ENCODE measurements at regions of chr9 and their contacts with region 1.

Region 1: DNA sequence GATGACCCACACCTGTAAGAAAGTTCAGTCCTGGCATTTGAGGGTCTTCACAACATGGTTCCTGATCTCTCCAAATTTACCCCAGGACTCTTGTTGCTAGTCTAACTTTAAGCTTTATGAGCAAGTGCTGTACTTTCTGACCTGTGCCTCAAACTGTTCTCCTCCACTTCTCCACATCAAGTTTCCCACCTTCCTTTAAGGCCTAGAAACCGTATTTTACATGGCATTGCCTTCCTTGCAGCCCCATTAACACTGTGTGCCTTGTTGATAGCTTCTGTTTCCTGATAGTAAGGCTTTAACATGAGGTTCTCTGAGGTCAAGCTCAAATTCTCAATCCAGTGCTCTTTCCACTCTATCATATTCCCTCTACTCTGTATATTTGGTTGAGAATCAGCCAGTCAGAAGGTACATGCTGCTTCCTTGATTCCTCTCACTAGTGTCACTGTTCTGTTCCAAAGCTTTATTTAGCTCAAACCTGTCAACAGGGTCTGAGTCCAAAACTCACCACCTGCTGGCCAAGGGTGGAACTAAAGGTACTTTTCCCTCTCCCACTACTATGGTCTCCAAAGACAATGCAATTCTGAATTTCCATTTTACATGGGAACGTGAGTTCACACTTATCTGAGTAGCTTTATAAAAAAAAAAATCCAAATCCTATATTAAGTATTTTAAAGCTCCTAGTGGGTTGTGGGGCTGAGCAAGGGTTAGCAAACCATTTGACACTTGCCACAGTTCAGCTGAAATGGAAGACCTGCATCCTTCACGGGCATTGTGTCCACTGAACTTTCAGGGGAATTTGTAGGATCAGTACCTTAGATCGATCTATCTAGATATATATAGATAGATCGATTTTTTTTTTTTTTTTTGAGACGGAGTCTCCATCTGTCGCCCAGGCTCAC is 21.1 kb downstream of the VCP start:
- DNase-seq: peak; percentile 53 to 80 (median 78)
- H3K4me3 ChIP-seq: no peak overlapping the region
- H3K27ac ChIP-seq: peak overlapping the region in 1 of 2 experiments; percentile 6
- H3K4me1 ChIP-seq: no peaks in the 10 kb centered on the region
- H3K27me3 ChIP-seq: no peaks in the 10 kb centered on the region

Region 2: DNA sequence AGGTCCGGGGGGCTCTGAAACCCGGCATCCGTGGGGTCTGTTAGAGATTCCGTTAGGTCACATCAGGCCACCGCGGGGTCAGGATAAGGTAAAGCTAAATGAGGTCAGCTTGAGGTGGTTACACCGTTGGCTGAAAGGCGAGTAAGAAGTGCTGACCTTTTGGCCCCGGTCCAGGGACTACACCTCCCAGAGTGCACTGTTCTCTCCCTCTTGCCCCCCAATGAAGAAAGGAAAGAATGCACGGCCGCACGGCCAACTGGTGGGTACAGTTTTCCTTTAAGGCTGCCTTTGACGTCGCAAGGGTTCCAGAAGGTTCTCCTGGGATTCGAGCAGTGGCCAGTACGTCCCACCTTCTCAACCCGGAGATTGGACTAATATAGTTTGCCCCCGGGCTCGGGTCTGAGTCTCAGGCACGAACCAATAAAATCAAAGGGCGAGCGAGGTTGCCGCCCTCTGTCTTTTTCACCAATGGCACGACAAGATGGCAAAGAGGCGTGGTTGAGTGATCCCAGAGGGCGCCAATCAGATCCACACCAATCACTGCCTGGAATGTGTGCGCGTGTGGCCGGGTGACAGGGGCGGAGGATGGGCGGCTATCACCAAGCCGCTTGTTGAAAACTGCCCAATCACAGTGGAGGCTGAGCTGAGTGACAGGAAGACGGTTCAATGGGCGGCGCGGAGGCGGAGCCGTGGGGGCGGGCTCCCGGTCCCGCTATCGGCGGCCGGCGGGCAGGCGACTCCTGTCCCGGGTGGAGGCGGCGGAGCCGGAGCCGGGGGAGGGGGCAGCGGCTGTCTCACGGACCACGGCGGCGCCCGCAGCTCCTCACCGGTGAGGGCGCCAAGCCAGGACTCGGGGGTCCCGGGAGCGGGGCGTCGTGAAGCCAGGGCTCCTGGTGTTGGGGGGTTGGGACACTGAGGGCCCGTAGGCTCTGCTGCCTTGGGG is 62.0 kb before region 1 on chr9 and contains the start of gene DNAJB5:
- CTCF ChIA-PET with region 1: interaction called, 13 read pairs
- POLR2A ChIA-PET with region 1: interaction called, 4 read pairs
- DNase-seq: peak; percentile 99
- H3K4me3 ChIP-seq: peak within 1 kb of the TSS; percentile 42 to 91 (median 78)
- H3K27ac ChIP-seq: peak within 1 kb of the TSS in 1 of 2 experiments; percentile 74
- H3K4me1 ChIP-seq: peaks cover 12 to 50% (median 34%) of the 10 kb centered on the region in 4 experiments
- H3K27me3 ChIP-seq: peaks cover 0 to 11% (median 3%) of the 10 kb centered on the region in 5 experiments

Region 3: DNA sequence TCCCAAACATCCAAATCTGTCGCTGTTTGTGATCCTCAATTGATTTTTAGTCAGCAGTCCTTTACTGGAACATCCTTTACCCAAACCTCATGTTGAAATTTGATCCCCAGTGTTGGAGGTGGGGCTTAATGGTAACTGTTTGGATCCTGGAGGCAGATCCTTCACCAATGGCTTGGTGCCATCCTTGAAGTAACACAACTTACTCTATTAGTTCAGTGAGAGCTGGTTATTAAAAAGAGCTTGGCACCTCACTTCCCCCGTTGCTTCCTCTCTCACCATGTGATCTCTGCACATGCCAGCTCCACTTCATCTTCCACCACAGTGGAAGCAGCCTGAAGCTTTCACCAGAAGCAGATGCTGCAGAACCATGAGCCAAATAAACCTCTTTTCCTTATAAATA is 21.5 kb before region 1 on chr9:
- CTCF ChIA-PET with region 1: interaction called, 10 read pairs
- POLR2A ChIA-PET with region 1: interaction called, 3 read pairs
- DNase-seq: peak in 1 of 3 donors; percentile 42
- H3K4me3 ChIP-seq: no peak overlapping the region
- H3K27ac ChIP-seq: no peak overlapping the region
- H3K4me1 ChIP-seq: peaks cover 0 to 24% (median 7%) of the 10 kb centered on the region in 4 experiments
- H3K27me3 ChIP-seq: no peaks in the 10 kb centered on the region

Region 4: DNA sequence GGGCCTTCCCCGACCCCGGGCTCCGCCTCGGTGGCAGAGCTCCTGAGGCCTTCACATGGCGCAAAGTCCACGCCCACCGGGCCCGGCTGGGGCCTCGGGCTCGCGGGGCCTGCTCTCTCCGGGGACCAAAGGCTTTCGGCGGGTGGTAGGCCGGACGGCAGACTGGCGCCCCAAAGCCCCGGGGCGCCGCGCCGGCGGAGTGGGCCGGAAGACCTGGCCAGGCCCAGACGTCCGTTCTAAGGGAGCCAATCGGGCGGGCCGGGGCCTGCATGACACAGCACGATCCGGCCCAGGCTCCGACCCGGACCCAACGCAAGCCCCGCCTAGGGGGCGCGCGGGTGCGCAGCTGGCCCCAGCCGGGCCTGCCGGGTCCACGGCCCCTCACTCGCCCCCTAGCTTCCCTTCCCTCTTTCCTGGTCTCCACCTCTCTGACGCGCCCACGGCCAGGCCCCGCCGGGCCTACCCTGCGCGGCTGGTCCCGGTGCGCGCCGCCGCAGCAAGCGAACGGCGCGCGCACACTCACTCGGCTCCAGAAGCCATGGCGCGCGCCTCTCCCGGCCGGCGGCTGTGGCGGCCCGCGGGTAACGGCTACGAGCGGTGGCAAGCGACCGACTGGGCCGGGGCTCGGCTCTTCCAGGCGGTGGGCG is 20.6 kb after region 1 on chr9:
- CTCF ChIA-PET with region 1: interaction called, 21 read pairs
- POLR2A ChIA-PET with region 1: interaction called, 6 read pairs
- DNase-seq: peak; percentile 93 to 96 (median 95)
- H3K4me3 ChIP-seq: peak overlapping the region; percentile 83 to 98 (median 92)
- H3K27ac ChIP-seq: peak overlapping the region; percentile 98 to 99
- H3K4me1 ChIP-seq: peaks cover 20 to 38% (median 25%) of the 10 kb centered on the region in 4 experiments
- H3K27me3 ChIP-seq: no peaks in the 10 kb centered on the region

Region 5: GRCh38 chr9:35102926-35103659 is 51.8 kb after region 1 on chr9 and contains the start of gene STOML2:
- CTCF ChIA-PET with region 1: interaction called, 10 read pairs
- POLR2A ChIA-PET with region 1: no interaction called
- DNase-seq: peak; percentile 97 to 98 (median 98)
- H3K4me3 ChIP-seq: peak within 1 kb of the TSS; percentile 67 to 95 (median 85)
- H3K27ac ChIP-seq: peak within 1 kb of the TSS; percentile 89 to 91
- H3K4me1 ChIP-seq: peaks cover 8 to 42% (median 29%) of the 10 kb centered on the region in 4 experiments
- H3K27me3 ChIP-seq: no peaks in the 10 kb centered on the region

Region 6: DNA sequence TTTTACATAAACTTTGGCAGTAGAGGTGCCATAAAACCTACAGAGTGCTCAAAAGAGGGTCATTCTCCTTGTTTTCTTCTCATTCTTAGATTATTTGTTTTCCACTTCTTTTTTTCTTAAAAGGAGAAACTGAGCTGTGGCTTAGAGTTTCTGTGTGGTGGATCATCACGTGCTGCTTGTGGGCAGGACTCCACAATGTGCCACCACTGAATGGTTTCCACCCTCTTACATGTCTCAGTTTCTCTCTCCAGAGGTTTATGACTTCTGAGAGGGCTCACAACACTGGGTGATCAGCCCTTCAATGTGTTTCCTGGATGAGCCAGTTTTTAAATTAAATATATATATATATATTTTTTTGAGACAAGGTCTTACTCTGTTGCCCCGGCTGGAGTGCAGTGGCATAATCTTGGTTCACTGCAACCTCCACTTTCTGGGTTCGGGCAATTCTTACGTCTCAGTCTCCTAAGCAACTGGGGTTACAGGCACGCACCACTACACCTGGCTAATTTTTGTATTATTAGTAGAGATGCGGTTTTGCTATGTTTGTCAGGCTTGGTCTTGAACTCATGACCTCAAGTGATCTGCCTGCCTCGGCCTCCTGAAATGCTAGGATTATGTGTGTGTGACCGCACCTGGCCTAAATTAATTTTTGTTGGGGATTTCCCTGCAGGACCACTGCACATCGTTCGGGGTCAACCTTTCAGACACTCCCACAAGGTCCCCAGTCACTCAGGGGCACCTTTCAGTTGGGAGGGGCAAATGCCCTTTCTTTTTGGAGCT is 107.4 kb after region 1 on chr9:
- CTCF ChIA-PET with region 1: no interaction called
- POLR2A ChIA-PET with region 1: no interaction called
- DNase-seq: no peak
- H3K4me3 ChIP-seq: no peak overlapping the region
- H3K27ac ChIP-seq: no peak overlapping the region
- H3K4me1 ChIP-seq: peaks cover 2 to 15% (median 14%) of the 10 kb centered on the region in 4 experiments
- H3K27me3 ChIP-seq: peaks cover 0 to 1% (median 0%) of the 10 kb centered on the region in 5 experiments